B cell (primary cell): ENCODE measurements at regions of chr17 and their contacts with region 1.

Region 1: DNA sequence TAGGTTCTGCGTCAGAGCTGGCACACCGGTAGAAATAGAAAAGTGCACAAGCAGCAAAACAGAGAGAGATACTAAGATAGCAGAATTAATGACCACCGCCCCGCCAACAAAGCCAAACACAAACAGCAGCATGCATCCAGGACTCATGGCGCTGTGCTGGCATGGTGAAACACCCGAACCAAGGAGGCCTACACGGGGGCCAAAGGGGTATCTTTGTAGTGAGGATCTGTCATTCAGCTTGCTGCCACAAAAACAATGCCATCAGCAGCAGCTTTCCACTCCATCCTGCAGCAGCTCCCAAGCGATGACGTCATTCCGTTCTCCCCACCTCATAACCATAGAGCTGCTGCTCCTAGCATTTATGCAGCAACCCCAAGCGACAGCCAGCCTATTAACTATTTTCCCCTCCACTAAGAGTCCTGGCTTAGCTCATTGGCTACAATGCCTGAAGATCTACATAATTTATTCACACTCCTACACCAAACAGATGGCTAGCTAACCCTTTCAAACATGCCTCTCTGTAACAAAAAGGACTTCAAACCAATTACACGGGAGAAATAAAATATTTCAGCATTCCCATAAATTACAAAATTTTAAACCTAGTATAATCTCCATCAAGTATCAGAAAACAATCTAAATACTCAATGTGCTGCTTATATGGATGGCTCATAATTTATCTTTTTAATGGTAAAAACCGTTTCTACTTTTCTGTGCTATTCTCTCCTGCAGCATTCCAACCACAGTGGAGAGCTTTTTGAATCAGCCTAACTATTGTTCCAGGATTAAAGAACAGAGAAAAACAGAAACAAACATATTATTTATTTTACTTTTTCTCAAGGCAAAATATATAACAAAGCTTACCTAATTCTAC is 73.9 kb downstream of the SPAG9 start:
- DNase-seq: no peak
- ATAC-seq: no peak
- H3K4me3 ChIP-seq: no peak overlapping the region
- H3K4me3 Mint-ChIP-seq: no peak overlapping the region
- H3K27ac ChIP-seq: no peak overlapping the region
- H3K27ac Mint-ChIP-seq: no peak overlapping the region
- H3K4me1 ChIP-seq: peaks cover 15 to 26% of the 10 kb centered on the region in 2 donors
- H3K4me1 Mint-ChIP-seq: peaks cover 18% of the 10 kb centered on the region
- H3K27me3 ChIP-seq: no peaks in the 10 kb centered on the region
- H3K27me3 Mint-ChIP-seq: no peaks in the 10 kb centered on the region
- CTCF ChIP-seq: no peak

Region 2: GRCh38 chr17:51029568-51030463 is 16.9 kb before region 1 on chr17:
- CTCF ChIA-PET with region 1: interaction called, 4 read pairs
- POLR2A ChIA-PET with region 1: interaction called, 7 read pairs
- intact Hi-C with region 1: loop called (anchors 2 kb)
- DNase-seq: peak; percentile 49
- ATAC-seq: peak; percentile 39
- H3K4me3 ChIP-seq: peak overlapping the region in 2 of 5 experiments; percentile 1 to 32
- H3K4me3 Mint-ChIP-seq: peak overlapping the region; percentile 63
- H3K27ac ChIP-seq: peak overlapping the region; percentile 15 to 22
- H3K27ac Mint-ChIP-seq: peak overlapping the region; percentile 56
- H3K4me1 ChIP-seq: peaks cover 7 to 21% of the 10 kb centered on the region in 2 donors
- H3K4me1 Mint-ChIP-seq: peaks cover 27% of the 10 kb centered on the region
- H3K27me3 ChIP-seq: no peaks in the 10 kb centered on the region
- H3K27me3 Mint-ChIP-seq: no peaks in the 10 kb centered on the region
- CTCF ChIP-seq: no peak

Region 3: DNA sequence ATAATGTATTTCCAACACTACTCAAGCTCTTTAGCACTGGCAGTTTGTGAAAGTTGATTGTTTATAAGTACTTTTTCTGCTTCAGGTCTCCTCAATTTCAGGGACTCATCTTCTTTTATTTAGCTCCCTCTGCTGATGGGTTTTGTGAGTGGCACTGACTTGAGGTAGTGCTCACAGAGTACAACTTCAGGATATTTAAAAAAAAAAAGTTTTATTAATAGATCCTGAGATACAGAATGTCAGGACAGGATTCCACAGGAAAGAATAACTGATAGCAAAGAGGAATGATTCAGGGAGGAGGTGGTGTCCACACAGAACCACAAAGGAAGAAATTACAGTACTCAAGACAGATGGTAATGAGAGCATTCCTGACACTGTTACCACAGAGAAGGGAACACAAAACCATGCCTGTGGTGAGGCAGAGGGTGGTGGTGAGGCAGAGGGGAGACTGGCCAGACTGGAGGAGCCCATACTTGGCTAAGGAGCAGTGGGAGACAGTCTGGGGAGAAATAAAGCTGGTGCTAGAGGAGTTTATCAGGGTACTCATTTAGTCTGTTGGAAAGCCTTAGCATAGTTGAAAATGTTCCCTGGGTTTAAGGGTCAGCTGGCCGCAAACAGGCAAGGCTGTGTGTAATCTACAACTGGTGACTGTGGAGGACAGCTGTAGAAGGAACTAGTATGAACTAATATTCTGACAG is 10.2 kb after region 1 on chr17:
- CTCF ChIA-PET with region 1: interaction called, 43 read pairs
- POLR2A ChIA-PET with region 1: no interaction called
- intact Hi-C with region 1: no loop called
- DNase-seq: peak; percentile 61
- ATAC-seq: peak; percentile 65
- H3K4me3 ChIP-seq: no peak overlapping the region
- H3K4me3 Mint-ChIP-seq: no peak overlapping the region
- H3K27ac ChIP-seq: no peak overlapping the region
- H3K27ac Mint-ChIP-seq: no peak overlapping the region
- H3K4me1 ChIP-seq: peaks cover 12 to 16% of the 10 kb centered on the region in 2 donors
- H3K4me1 Mint-ChIP-seq: peaks cover 15% of the 10 kb centered on the region
- H3K27me3 ChIP-seq: no peaks in the 10 kb centered on the region
- H3K27me3 Mint-ChIP-seq: no peaks in the 10 kb centered on the region
- CTCF ChIP-seq: peak; percentile 77

Region 4: GRCh38 chr17:51079049-51079448 is 32.3 kb after region 1 on chr17:
- CTCF ChIA-PET with region 1: no interaction called
- POLR2A ChIA-PET with region 1: no interaction called
- intact Hi-C with region 1: no loop called
- DNase-seq: no peak
- ATAC-seq: no peak
- H3K4me3 ChIP-seq: no peak overlapping the region
- H3K4me3 Mint-ChIP-seq: no peak overlapping the region
- H3K27ac ChIP-seq: no peak overlapping the region
- H3K27ac Mint-ChIP-seq: no peak overlapping the region
- H3K4me1 ChIP-seq: no peaks in the 10 kb centered on the region
- H3K4me1 Mint-ChIP-seq: peaks cover 10% of the 10 kb centered on the region
- H3K27me3 ChIP-seq: no peaks in the 10 kb centered on the region
- H3K27me3 Mint-ChIP-seq: no peaks in the 10 kb centered on the region
- CTCF ChIP-seq: no peak

Region 5: GRCh38 chr17:51120739-51121617 is 74.2 kb after region 1 on chr17 and contains the start of gene SPAG9:
- CTCF ChIA-PET with region 1: no interaction called
- POLR2A ChIA-PET with region 1: no interaction called
- intact Hi-C with region 1: loop called (anchors 1 kb)
- DNase-seq: peak; percentile 96
- ATAC-seq: peak; percentile 84
- H3K4me3 ChIP-seq: peak within 1 kb of the TSS; percentile 74 to 98 (median 89)
- H3K4me3 Mint-ChIP-seq: peak within 1 kb of the TSS; percentile 98
- H3K27ac ChIP-seq: peak within 1 kb of the TSS; percentile 93 to 94
- H3K27ac Mint-ChIP-seq: peak within 1 kb of the TSS; percentile 99
- H3K4me1 ChIP-seq: peaks cover 33 to 35% of the 10 kb centered on the region in 2 donors
- H3K4me1 Mint-ChIP-seq: peaks cover 49% of the 10 kb centered on the region
- H3K27me3 ChIP-seq: no peaks in the 10 kb centered on the region
- H3K27me3 Mint-ChIP-seq: no peaks in the 10 kb centered on the region
- CTCF ChIP-seq: no peak
- total RNA-seq, gene SPAG9: 64.1 and 69.3 TPM in 2 replicates

Region 6: DNA sequence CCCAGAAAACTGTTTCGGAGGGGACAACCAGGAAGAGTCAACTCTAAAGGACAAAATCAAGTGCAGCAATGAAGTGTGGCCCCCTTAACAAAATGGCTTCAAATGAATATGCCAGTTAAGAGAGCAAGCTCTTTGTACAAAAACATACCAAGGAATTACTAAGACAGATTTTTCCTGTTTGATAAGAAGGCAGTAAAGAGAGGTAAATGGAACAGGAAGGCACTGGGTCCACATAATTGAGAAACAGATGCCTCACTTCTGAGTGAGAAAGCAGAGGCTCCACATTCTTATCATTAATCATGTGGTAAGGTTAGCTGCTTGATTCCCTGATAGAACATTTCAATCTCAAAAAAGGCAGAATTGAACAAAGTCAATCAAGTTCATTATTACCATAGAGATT is 168.2 kb after region 1 on chr17:
- CTCF ChIA-PET with region 1: no interaction called
- POLR2A ChIA-PET with region 1: no interaction called
- intact Hi-C with region 1: no loop called
- DNase-seq: no peak
- ATAC-seq: no peak
- H3K4me3 ChIP-seq: no peak overlapping the region
- H3K4me3 Mint-ChIP-seq: no peak overlapping the region
- H3K27ac ChIP-seq: no peak overlapping the region
- H3K27ac Mint-ChIP-seq: no peak overlapping the region
- H3K4me1 ChIP-seq: no peaks in the 10 kb centered on the region
- H3K4me1 Mint-ChIP-seq: no peaks in the 10 kb centered on the region
- H3K27me3 ChIP-seq: no peaks in the 10 kb centered on the region
- H3K27me3 Mint-ChIP-seq: no peaks in the 10 kb centered on the region
- CTCF ChIP-seq: no peak